ENCODE measurements at regions of chr1 and their contacts with region 1.

Region 1: GRCh38 chr1:44318097-44319088 is 36.7 kb downstream of the ERI3 start:
- DNase-seq: peak in 1 of 2 experiments; percentile 21
- H3K4me3 ChIP-seq: no peak overlapping the region
- H3K27ac ChIP-seq: no peak overlapping the region
- H3K4me1 ChIP-seq: no peaks in the 10 kb centered on the region
- H3K27me3 ChIP-seq: no peaks in the 10 kb centered on the region
- CTCF ChIP-seq: peak; percentile 92

Region 2: DNA sequence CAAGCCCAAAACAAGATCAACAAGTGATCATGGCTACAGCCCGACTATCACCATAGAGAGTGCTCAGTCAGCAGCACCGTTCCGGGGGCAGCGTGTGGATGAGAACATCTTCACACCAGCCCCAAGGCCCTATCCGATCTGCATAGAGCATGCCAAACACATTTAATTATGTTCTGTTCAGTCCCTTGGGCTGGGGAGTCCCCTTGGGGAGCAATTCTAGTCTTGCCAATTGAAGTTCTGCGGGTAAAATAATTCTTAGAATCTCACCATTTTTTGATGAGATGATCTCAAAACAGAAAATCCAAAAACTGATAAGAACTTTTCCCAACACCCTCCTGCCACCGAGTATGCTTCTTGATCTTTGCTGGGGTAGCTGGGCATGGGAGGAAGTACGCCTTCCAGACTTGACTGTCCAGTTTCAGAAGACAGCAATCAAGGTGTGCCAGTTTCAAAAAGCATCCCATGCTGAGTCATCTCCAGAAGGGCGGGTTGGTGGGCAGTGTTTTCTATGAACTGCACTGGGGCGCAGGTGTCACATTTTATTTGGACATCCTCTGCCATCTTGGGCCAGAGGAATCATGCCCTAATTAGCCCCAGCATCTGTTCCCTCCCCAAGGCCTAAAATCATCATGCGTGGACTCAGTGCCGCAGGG is 808.5 kb before region 1 on chr1:
- CTCF ChIA-PET with region 1: no interaction called
- POLR2A ChIA-PET with region 1: no interaction called
- intact Hi-C with region 1: no loop called
- DNase-seq: peak; percentile 76 to 91
- H3K4me3 ChIP-seq: peak overlapping the region; percentile 37; the same call in 1 of the 2 replicates
- H3K27ac ChIP-seq: peak overlapping the region; percentile 95
- H3K4me1 ChIP-seq: peaks cover 35% of the 10 kb centered on the region
- H3K27me3 ChIP-seq: no peaks in the 10 kb centered on the region
- CTCF ChIP-seq: no peak

Region 3: GRCh38 chr1:44135886-44136285 is 182.5 kb before region 1 on chr1:
- CTCF ChIA-PET with region 1: no interaction called
- POLR2A ChIA-PET with region 1: no interaction called
- intact Hi-C with region 1: no loop called
- DNase-seq: no peak
- H3K4me3 ChIP-seq: no peak overlapping the region
- H3K27ac ChIP-seq: no peak overlapping the region
- H3K4me1 ChIP-seq: no peaks in the 10 kb centered on the region
- H3K27me3 ChIP-seq: no peaks in the 10 kb centered on the region
- CTCF ChIP-seq: no peak

Region 4: DNA sequence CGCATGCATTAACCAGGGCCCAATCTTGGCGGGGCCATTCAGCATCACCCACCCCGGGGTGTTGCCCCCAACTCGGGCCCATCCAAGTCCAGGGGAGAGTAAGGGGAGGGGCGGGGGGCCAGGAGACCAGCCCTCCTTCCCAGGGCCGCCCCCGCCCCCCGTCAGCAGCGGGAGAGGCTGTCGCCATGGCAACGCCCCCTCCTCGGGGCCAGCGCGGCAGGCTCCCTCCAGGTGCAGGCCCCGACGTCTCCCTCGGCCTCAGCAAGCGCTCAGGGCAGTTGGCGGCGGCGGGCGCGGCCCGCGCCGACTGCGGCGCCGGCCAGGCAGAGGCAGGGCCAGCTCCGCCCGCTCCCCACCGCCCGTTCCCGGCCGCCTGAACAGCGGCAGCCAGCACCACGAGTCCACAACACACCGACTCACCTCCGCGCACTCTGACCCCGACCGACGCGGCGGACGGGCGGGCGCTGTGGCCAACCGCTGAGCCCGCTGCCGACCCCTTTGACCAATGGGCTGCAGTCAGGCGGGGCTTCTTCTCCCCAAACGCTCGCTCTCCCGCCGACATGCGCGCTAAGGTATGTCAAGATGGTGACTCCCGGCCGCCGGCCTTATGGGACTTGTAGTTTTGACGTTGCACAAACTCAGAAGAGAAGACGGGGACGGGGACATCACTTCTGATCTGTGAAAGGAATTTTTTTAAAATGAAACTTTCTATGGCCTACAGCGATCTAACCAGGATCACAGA is 36.6 kb after region 1 on chr1 and contains the start of gene ERI3:
- CTCF ChIA-PET with region 1: interaction called, 17 read pairs
- POLR2A ChIA-PET with region 1: no interaction called
- intact Hi-C with region 1: no loop called
- DNase-seq: peak; percentile 92 to 98
- H3K4me3 ChIP-seq: peak within 1 kb of the TSS; percentile 99
- H3K27ac ChIP-seq: 0 out of 2 replicates have a peak within 1 kb of the TSS, but pooled peaks have one; percentile 40
- H3K4me1 ChIP-seq: peaks cover 26% of the 10 kb centered on the region; the same call in 1 of the 2 replicates
- H3K27me3 ChIP-seq: no peaks in the 10 kb centered on the region
- CTCF ChIP-seq: no peak
- total RNA-seq, gene ERI3: 120 and 133 TPM in 2 replicates

Region 5: GRCh38 chr1:44390277-44390676 is 71.9 kb after region 1 on chr1:
- CTCF ChIA-PET with region 1: interaction called, 13 read pairs
- POLR2A ChIA-PET with region 1: no interaction called
- intact Hi-C with region 1: no loop called
- DNase-seq: peak; percentile 41 to 75
- H3K4me3 ChIP-seq: no peak overlapping the region
- H3K27ac ChIP-seq: no peak overlapping the region
- H3K4me1 ChIP-seq: peaks cover 14% of the 10 kb centered on the region; the same call in 1 of the 2 replicates
- H3K27me3 ChIP-seq: no peaks in the 10 kb centered on the region
- CTCF ChIP-seq: no peak

Region 6: DNA sequence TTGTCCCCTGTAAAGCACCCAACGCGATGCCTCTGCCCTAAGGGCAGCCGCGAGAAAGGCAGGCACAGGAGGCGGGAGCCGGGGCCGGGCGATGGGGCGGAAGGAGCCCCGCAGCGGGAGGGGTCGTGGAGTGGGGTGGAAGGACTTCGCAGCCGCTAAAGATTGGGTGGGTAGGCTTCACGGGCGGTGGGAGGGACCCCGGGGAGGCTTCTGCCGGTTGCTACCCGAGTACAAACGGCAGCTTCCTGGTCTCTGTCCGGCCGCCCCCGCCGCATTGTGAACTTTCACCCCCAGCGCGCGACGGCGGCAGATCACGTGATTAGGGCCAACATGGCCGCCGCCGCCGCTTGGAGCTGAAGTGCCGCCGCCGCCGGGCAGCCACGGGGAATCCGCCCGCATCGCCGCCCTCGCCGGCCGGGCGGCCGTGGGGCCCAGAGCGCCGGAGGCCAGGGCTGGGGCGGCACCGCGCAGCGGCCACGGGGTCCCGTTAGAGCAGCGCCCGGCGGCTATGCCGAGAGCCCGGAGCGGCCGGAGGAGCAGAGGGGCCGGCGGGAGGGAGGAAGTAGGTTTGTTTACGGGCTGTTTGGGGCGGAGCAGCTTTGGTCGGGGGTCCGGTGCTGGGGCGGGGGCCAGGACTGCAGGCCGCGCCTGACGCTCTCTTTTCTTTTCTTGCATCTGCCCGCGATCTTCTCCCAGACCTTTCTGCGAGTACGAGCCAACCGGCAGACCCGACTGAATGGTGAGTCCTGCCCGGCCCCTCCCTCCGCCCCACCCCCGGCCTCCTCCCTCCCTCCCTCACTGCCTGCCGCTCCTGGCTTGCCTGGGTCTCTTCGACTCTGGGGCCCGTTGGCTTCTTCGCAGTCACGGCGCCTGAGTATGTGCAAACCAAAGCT is 313.5 kb after region 1 on chr1:
- CTCF ChIA-PET with region 1: no interaction called
- POLR2A ChIA-PET with region 1: interaction called, 14 read pairs
- intact Hi-C with region 1: no loop called
- DNase-seq: peak; percentile 76 to 90
- H3K4me3 ChIP-seq: peak overlapping the region; percentile 74
- H3K27ac ChIP-seq: peak overlapping the region; percentile 97
- H3K4me1 ChIP-seq: peaks cover 44% of the 10 kb centered on the region
- H3K27me3 ChIP-seq: no peaks in the 10 kb centered on the region
- CTCF ChIP-seq: no peak